Left cardiac atrium (tissue), 4 donors: ENCODE measurements at regions of chr9 and their contacts with region 1.

Region 1: DNA sequence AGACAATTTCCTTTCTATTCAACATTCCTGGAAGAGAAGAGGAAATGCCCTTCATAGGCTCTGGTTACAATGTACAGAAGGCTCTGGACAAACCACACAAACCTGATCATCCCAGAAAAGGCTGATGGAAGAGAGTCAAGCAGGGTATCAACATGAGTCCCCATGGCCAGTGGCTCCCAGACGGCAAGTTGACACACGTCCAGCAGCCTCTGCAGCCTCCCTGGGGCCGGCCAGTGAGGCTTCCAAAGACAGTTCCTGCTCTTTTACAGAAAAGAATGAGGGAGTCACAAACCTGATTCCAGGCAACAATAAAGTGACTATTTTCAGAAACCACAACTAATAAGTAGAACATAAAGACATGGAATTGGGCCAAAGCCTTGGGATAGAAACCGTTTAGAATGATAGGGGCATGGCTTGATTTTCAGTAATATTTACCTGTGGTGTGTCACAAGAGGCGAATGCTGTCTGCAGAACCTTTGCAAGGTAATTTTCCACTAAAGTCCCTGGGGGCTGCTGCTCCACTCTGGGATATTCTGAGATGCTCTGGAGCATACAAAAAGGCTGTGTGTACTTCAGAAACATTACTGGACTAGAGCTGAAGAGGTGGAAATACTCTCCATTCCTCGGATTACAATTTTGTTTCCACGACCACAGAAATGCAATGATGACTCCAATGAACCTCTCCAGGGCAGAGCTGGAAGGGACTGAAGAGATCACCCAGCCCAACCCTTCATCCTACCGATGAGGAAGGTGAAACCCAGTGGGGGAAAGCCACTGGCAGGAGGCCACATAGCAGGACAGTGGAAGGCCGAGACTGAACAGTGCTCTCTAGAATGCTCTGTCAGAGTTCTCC is 10.4 kb downstream of the MED27 start:
- DNase-seq: no peak
- ATAC-seq: no peak

Region 2: GRCh38 chr9:131927091-131927490 is 142.2 kb before region 1 on chr9:
- intact Hi-C with region 1: no loop called
- DNase-seq: no peak
- ATAC-seq: no peak

Region 3: DNA sequence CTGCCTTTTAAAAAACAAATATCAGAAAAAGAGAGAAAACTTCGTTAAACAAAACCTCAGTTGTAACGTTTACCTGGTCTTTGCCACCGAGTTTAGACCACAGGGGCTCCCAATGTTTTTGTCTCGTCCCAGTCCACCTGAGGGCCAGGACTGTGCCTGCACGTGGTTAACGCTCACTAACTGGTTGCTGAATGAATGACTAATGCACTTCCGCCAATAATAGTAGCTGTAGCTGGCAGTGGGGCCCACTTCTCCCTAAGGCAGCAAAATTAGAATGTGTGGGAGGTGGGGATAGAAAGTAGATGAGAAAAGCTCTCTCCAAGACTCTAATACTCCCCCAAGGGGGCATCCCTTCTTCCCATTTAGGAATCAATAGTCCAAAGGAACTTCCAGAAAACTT is 39.5 kb after region 1 on chr9:
- intact Hi-C with region 1: loop called in 1 of 2 experiments (anchors 2 kb)
- DNase-seq: no peak
- ATAC-seq: no peak